Ascending aorta (tissue), 2 donors: ENCODE measurements at regions of chr17 and their contacts with region 1.

Region 1: GRCh38 chr17:10992106-10992880 is 154.4 kb upstream of the PIRT start:
- DNase-seq: no peak
- H3K4me3 ChIP-seq: no peak overlapping the region
- H3K27ac ChIP-seq: no peak overlapping the region
- H3K4me1 ChIP-seq: no peaks in the 10 kb centered on the region
- H3K27me3 ChIP-seq: no peaks in the 10 kb centered on the region
- CTCF ChIP-seq: no peak

Region 2: GRCh38 chr17:10932938-10933337 is 59.4 kb before region 1 on chr17:
- intact Hi-C with region 1: loop called (anchors 2 kb)
- DNase-seq: no peak
- H3K4me3 ChIP-seq: no peak overlapping the region
- H3K27ac ChIP-seq: no peak overlapping the region
- H3K4me1 ChIP-seq: no peaks in the 10 kb centered on the region
- H3K27me3 ChIP-seq: no peaks in the 10 kb centered on the region
- CTCF ChIP-seq: no peak